Right ventricle myocardium inferior (tissue), 1 donor: ENCODE measurements at regions of chr3 and their contacts with region 1.

Region 1: GRCh38 chr3:124599779-124600609 is 130.3 kb upstream of the UMPS start:
- DNase-seq: no peak
- ATAC-seq: peak; percentile 56

Region 2: GRCh38 chr3:124504332-124505059 is 95.5 kb before region 1 on chr3:
- intact Hi-C with region 1: no loop called
- DNase-seq: no peak
- ATAC-seq: peak; percentile 74

Region 3: DNA sequence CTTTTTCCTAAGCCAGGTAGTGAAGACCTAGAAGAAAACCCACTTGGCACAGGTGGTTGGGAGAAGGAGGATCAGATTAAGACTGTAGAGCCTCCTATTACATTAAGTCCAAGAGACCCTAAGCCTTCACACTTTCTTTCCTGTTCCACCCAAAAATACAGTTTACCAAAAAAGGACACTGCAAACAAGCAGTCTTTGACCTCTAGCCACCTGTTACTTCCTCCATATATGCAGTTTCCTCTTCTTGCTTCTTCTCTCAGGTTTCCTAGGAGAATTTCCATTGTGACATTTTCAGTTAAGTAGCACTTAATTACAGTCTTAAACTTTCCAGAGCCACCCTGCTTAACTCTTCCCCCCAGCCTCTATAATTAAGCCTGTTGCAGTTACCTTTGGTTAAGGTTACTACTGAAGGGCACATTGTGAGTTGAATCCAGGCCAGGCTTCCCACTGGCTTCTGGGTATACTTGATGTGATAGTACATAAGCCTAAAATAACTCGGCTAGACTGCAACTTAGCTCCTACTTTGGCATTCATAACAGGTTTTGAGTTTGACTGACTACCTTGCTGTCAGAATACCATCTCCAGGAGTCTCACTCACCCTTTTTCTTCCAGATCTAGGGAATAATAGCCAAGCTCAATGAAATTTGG is 16.0 kb after region 1 on chr3:
- intact Hi-C with region 1: loop called (anchors 2 kb)
- DNase-seq: no peak
- ATAC-seq: peak; percentile 86

Region 4: DNA sequence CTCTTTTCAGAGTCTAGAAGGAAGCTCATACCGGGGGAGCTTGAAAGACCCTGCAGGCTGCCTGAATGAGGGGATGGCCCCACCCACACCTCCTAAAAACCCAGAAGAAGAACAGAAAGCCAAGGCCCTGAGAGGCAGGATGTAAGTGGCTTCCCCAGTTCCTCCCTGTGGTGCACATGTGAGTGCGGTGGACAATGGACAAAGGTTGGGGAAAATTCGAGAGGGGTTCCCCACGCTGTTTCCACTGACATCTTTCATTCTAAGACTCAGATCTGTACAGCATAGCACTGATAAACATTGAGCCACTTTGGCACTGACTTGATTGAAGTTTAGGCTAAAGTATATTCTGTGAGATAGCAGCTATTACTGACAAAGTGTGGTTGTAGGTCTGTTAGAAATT is 50.8 kb after region 1 on chr3:
- intact Hi-C with region 1: loop called (anchors 5 kb)
- DNase-seq: no peak
- ATAC-seq: no peak